GM10248 (cell line): ENCODE measurements at regions of chr2 and their contacts with region 1.

Region 1: GRCh38 chr2:227308784-227309183 is 16.3 kb upstream of the MFF start:
- DNase-seq: no peak
- CTCF ChIP-seq: no peak

Region 2: GRCh38 chr2:227248876-227249275 is 59.9 kb before region 1 on chr2:
- CTCF ChIA-PET with region 1: no interaction called
- POLR2A ChIA-PET with region 1: no interaction called
- DNase-seq: no peak
- CTCF ChIP-seq: no peak

Region 3: GRCh38 chr2:227280895-227281294 is 27.9 kb before region 1 on chr2:
- CTCF ChIA-PET with region 1: no interaction called
- POLR2A ChIA-PET with region 1: no interaction called
- DNase-seq: no peak
- CTCF ChIP-seq: no peak

Region 4: GRCh38 chr2:227296671-227297405 is 11.9 kb before region 1 on chr2:
- CTCF ChIA-PET with region 1: interaction called, 10 read pairs
- POLR2A ChIA-PET with region 1: no interaction called
- DNase-seq: no peak
- CTCF ChIP-seq: no peak

Region 5: DNA sequence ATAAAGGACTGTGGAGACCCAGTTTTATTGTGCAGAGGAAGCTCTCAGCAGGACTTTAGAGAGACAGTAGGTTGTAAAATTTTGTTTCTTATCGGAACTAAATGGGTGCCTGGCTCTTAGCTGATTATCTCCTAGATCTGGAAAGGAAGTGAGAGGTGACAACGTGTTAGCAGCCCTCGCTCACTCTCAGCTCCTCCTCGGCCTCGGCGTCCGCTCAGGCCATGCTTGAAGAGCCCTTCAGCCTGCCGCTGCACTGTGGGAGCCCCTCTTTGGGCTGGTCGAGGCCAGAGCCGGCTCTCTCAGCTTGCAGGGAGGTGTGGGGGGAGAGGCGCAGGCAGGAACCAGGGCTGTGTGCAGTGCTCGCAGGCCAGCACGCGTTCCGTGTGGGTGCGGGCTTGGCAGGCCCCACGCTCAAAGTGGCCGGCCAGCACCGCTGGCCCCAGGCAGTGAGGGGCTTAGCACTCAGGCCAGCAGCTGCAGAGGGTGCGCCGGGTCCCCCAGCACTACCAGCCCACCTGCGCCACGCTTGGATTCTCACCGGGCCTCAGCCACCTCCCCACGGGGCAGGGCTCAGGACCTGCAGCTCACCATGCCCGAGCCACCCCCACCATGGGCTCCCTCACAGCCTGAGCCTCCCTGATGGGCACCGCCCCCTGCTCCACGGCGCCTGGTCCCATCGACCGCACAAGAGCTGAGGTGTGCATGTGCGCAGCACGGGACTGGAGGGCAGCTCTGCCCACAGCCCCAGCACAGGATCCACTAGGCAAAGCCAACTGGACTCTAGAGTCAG is 11.7 kb after region 1 on chr2:
- CTCF ChIA-PET with region 1: no interaction called
- POLR2A ChIA-PET with region 1: no interaction called
- DNase-seq: no peak
- CTCF ChIP-seq: no peak

Region 6: DNA sequence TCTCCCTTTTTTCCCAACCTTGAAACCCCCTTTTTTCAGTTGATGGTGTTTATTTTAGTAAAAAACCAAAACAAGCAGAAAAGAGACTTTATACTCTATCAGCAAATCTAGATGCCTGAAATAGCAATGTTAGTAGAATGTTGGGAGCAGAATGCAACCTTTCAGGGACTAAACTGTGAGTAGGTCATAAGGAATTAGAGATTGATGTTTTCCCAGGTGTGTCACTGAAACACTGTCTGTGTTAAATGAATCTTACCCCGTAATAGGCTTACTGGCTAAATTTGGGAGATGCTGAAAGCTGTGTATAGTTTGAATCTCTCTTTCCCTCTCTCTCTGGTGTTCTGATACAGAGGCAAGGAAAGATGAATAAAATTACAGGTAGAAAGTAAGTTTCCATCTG is 207.0 kb after region 1 on chr2:
- CTCF ChIA-PET with region 1: no interaction called
- POLR2A ChIA-PET with region 1: no interaction called
- DNase-seq: no peak
- CTCF ChIP-seq: no peak